Activated CD4-positive, alpha-beta T cell treated with anti-CD3 and anti-CD28 coated beads, Interleukin-2, amount 10 ng/mL, durations not matched to agents 24 days and 14 days (primary cell): ENCODE measurements at regions of chr2 and their contacts with region 1.

Region 1: DNA sequence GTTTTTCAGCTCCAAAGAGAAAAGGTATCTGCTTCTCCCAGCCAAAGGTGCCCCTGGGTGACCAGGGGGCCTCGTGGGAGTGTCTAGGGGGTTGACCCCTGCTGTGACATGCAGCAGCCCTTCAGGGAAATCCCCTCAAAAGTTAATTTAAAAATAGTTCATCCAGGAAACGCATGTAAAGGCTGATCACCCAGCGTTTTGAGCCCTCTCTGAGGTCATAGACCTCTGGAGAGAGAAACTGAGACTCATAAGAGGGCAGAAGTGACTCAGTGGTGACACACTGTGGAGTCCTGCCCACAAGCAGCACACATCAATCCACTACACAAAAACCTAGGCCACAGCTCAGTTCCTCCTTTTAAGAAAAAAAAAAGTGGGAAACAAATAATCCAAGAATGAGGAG is 11.9 kb downstream of the GAL3ST2 start:
- DNase-seq: peak; percentile 67
- H3K4me3 Mint-ChIP-seq: no peak overlapping the region
- H3K27ac Mint-ChIP-seq: peak overlapping the region; percentile 81
- H3K4me1 Mint-ChIP-seq: peaks cover 12% of the 10 kb centered on the region
- H3K27me3 Mint-ChIP-seq: peaks cover 6% of the 10 kb centered on the region

Region 2: GRCh38 chr2:241803387-241804325 is 15.1 kb after region 1 on chr2:
- intact Hi-C with region 1: loop called (anchors 2 kb)
- DNase-seq: peak; percentile 85
- H3K4me3 Mint-ChIP-seq: peak overlapping the region; percentile 78
- H3K27ac Mint-ChIP-seq: peak overlapping the region; percentile 60
- H3K4me1 Mint-ChIP-seq: peaks cover 9% of the 10 kb centered on the region
- H3K27me3 Mint-ChIP-seq: peaks cover 2% of the 10 kb centered on the region

Region 3: GRCh38 chr2:242020196-242021004 is 231.8 kb after region 1 on chr2:
- intact Hi-C with region 1: no loop called
- DNase-seq: no peak
- H3K4me3 Mint-ChIP-seq: no peak overlapping the region
- H3K27ac Mint-ChIP-seq: no peak overlapping the region
- H3K4me1 Mint-ChIP-seq: no peaks in the 10 kb centered on the region
- H3K27me3 Mint-ChIP-seq: peaks cover 26% of the 10 kb centered on the region